ENCODE measurements at regions of chr4 and their contacts with region 1.

Region 1: GRCh38 chr4:128809477-128810330 is at the start of gene JADE1:
- DNase-seq: peak; percentile 95
- ATAC-seq: peak; percentile 61
- H3K4me3 ChIP-seq: peak within 1 kb of the TSS; percentile 72 to 95 (median 78)
- H3K4me3 Mint-ChIP-seq: peak within 1 kb of the TSS; percentile 96
- H3K27ac ChIP-seq: peak within 1 kb of the TSS; percentile 74 to 89
- H3K27ac Mint-ChIP-seq: peak within 1 kb of the TSS; percentile 98
- H3K4me1 ChIP-seq: peaks cover 7 to 16% of the 10 kb centered on the region in 2 donors
- H3K4me1 Mint-ChIP-seq: peaks cover 11% of the 10 kb centered on the region
- H3K27me3 ChIP-seq: no peaks in the 10 kb centered on the region
- H3K27me3 Mint-ChIP-seq: no peaks in the 10 kb centered on the region
- CTCF ChIP-seq: peak; percentile 66
- total RNA-seq, gene JADE1: 42.4 and 45.4 TPM in 2 replicates

Region 2: DNA sequence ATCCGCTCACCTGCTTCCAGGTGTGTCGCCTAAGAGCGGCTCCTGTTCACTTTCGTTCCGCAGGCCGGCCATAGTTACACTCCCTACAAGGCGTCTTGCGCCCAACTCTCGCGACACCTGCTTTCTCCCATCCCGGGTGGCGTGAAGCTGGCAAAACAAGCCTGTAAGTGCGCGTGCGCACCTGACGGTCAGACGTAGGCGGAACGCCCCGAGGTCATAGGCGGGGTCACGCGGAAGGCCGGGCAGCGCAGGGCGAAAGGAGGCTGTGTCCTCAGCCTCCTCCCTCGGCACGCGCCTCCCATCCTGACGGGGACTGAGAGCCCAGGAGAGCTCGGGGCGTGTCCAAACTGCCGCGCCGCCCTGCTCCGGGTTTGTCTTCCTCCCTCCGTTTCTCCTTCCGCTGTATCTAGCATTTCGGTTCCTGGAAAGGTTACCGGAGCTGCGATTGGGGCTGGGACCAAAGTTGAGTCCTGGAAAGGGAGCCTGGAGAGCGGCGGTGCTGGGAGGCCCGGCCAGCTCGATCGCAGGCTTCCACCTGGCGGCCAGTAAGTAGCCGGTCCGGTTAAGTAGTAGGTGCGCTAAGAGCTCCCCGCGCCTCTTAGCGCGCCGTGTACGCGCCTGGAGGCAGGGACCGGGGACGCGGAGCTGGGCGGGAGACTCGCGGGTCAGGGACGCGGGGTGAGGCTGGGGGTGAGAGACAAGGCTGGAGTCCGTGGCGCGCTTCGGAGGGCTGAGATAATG is 844.5 kb before region 1 on chr4 and contains the starts of genes ABHD18 and MFSD8:
- CTCF ChIA-PET with region 1: interaction called, 4 read pairs
- POLR2A ChIA-PET with region 1: interaction called, 5 read pairs
- intact Hi-C with region 1: loop called (anchors 1 kb)
- DNase-seq: peak; percentile 100
- ATAC-seq: peak; percentile 97
- H3K4me3 ChIP-seq: peak within 1 kb of the TSS; percentile 76 to 100 (median 85)
- H3K4me3 Mint-ChIP-seq: peak within 1 kb of the TSS; percentile 98
- H3K27ac ChIP-seq: peak within 1 kb of the TSS; percentile 86 to 96
- H3K27ac Mint-ChIP-seq: peak within 1 kb of the TSS; percentile 97
- H3K4me1 ChIP-seq: peaks cover 5 to 18% of the 10 kb centered on the region in 2 donors
- H3K4me1 Mint-ChIP-seq: peaks cover 34% of the 10 kb centered on the region
- H3K27me3 ChIP-seq: no peaks in the 10 kb centered on the region
- H3K27me3 Mint-ChIP-seq: no peaks in the 10 kb centered on the region
- CTCF ChIP-seq: peak; percentile 33
- total RNA-seq, gene ABHD18: 17.5 and 18.3 TPM in 2 replicates
- total RNA-seq, gene MFSD8: 52.2 and 53.1 TPM in 2 replicates

Region 3: DNA sequence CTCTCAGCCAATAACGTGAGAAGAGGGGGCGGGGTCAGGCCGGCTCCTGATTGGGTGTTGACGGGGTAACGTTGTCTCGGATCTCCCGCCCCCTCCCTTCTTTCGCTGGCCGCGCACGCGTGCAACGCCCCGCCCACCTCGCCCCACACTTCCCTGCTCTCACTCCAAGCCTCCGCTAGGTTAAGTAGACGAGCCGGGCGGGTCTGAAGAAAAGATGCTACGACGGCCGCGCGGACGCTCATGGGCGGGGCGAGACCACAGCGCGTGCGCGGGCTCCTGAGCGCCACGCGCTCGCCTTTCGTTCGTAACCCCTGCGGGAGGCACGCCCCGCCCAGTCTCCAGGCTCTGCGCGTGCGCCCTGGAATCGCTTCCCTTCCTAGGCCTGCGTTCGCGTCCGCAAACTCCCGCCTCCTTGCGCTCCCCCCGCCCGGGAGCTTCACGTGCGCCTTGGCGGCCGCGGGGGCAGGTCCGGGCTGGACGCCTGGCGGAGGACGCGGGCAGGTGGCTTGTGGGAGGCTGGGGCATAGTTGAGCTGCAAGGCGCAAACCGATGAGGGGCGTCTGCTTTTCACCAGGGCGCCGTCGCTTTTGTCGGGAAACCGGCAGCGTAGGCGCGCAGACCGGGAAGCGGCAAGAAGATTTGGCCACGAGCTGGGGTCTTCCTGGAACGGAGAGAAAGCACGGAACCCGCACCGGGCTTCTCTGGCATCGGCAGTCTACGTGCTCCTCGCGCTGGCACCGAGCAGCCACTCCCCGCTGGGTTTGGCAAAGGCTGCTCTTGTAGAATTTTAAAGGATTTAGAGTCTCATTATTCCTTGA is 521.6 kb before region 1 on chr4:
- CTCF ChIA-PET with region 1: interaction called, 3 read pairs
- POLR2A ChIA-PET with region 1: interaction called, 9 read pairs
- intact Hi-C with region 1: loop called (anchors 1 kb)
- DNase-seq: peak; percentile 100
- ATAC-seq: peak; percentile 87
- H3K4me3 ChIP-seq: peak overlapping the region; percentile 51 to 90 (median 88)
- H3K4me3 Mint-ChIP-seq: peak overlapping the region; percentile 87
- H3K27ac ChIP-seq: peak overlapping the region; percentile 88 to 92
- H3K27ac Mint-ChIP-seq: peak overlapping the region; percentile 90
- H3K4me1 ChIP-seq: peaks cover 23 to 27% of the 10 kb centered on the region in 2 donors
- H3K4me1 Mint-ChIP-seq: peaks cover 29% of the 10 kb centered on the region
- H3K27me3 ChIP-seq: no peaks in the 10 kb centered on the region
- H3K27me3 Mint-ChIP-seq: no peaks in the 10 kb centered on the region
- CTCF ChIP-seq: no peak

Region 4: DNA sequence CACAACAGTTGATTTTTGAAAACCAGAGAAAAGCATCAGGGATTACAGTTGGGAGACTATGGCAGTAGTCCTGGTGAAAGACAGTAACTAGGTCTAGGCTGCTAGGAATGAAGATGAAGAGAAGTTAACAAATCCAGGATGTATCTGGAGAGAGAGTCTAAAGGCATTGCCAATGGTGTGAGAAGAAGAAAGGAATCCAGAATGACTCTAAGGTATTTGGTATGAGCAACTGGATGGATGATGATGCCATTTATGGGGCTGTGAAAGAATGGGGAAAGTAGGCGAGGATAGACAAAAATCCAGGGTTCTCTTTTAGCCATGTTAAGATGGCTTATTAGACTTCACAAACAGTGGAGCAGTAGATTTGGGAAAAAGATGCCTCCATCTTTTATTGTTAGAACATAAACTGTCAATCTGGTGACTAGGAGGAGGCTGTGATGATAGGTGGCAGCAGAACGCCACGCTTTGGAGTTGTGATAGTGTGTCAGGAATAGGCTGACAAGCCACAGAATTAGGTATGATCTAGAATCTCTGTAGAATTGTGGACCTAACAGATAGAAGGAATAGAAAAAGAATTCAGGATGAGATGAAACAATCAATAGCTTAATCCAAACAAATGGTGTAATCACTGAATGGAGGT is 27.5 kb before region 1 on chr4:
- CTCF ChIA-PET with region 1: interaction called, 5 read pairs
- POLR2A ChIA-PET with region 1: no interaction called
- intact Hi-C with region 1: loop called (anchors 2 kb)
- DNase-seq: peak; percentile 57
- ATAC-seq: peak; percentile 68
- H3K4me3 ChIP-seq: no peak overlapping the region
- H3K4me3 Mint-ChIP-seq: no peak overlapping the region
- H3K27ac ChIP-seq: no peak overlapping the region
- H3K27ac Mint-ChIP-seq: no peak overlapping the region
- H3K4me1 ChIP-seq: no peaks in the 10 kb centered on the region
- H3K4me1 Mint-ChIP-seq: no peaks in the 10 kb centered on the region
- H3K27me3 ChIP-seq: no peaks in the 10 kb centered on the region
- H3K27me3 Mint-ChIP-seq: peaks cover 3% of the 10 kb centered on the region
- CTCF ChIP-seq: peak; percentile 64

Region 5: DNA sequence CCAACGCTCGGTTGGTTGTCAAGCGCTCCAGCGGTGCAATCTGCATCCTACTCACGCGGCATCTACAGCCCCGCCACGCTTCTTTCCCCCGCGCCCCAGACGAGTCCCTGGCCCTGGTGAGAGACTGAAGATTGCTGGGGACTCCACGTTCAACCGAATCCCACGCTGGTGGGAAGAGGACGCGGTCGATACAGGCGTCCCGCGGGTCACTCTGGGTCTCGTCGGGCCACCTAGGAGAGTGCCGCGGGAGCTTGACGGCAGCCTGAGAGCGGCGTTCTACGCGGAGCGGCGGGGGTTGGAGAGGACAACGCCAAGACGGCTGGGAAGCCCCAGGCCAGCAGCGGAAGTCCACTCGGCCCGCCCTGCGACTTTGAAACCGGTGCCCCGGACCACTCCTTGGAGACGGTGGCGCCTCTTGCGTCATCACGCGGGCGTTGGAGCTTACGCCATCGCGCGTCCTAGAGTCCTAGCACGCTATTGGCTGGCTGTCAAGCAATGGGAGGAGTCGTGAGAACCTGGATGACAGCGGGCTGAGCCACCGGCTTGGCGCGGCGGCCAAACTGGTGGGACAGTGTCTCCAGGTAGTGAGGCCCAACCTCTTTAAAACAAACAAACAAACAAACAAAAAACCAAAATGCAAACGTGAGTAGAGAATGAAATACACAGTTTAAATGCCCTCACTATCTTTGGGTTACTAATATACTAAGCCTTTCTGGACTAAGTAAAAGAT is 283.7 kb after region 1 on chr4 and contains the start of gene SCLT1:
- CTCF ChIA-PET with region 1: no interaction called
- POLR2A ChIA-PET with region 1: interaction called, 4 read pairs
- intact Hi-C with region 1: loop called (anchors 1 kb)
- DNase-seq: peak; percentile 97
- ATAC-seq: peak; percentile 95
- H3K4me3 ChIP-seq: peak within 1 kb of the TSS; percentile 79 to 98 (median 95)
- H3K4me3 Mint-ChIP-seq: no peak within 1 kb of the TSS
- H3K27ac ChIP-seq: peak within 1 kb of the TSS; percentile 95 to 96
- H3K27ac Mint-ChIP-seq: no peak within 1 kb of the TSS
- H3K4me1 ChIP-seq: peaks cover 22 to 43% of the 10 kb centered on the region in 2 donors
- H3K4me1 Mint-ChIP-seq: peaks cover 46% of the 10 kb centered on the region
- H3K27me3 ChIP-seq: no peaks in the 10 kb centered on the region
- H3K27me3 Mint-ChIP-seq: no peaks in the 10 kb centered on the region
- CTCF ChIP-seq: no peak
- total RNA-seq, gene SCLT1: 27.0 and 27.2 TPM in 2 replicates

Region 6: GRCh38 chr4:130359542-130359941 is 1549.8 kb after region 1 on chr4:
- CTCF ChIA-PET with region 1: no interaction called
- POLR2A ChIA-PET with region 1: no interaction called
- intact Hi-C with region 1: no loop called
- DNase-seq: no peak
- ATAC-seq: no peak
- H3K4me3 ChIP-seq: no peak overlapping the region
- H3K4me3 Mint-ChIP-seq: no peak overlapping the region
- H3K27ac ChIP-seq: no peak overlapping the region
- H3K27ac Mint-ChIP-seq: no peak overlapping the region
- H3K4me1 ChIP-seq: no peaks in the 10 kb centered on the region
- H3K4me1 Mint-ChIP-seq: no peaks in the 10 kb centered on the region
- H3K27me3 ChIP-seq: no peaks in the 10 kb centered on the region
- H3K27me3 Mint-ChIP-seq: no peaks in the 10 kb centered on the region
- CTCF ChIP-seq: no peak